ENCODE measurements at regions of chr11 and their contacts with region 1.

Region 1: DNA sequence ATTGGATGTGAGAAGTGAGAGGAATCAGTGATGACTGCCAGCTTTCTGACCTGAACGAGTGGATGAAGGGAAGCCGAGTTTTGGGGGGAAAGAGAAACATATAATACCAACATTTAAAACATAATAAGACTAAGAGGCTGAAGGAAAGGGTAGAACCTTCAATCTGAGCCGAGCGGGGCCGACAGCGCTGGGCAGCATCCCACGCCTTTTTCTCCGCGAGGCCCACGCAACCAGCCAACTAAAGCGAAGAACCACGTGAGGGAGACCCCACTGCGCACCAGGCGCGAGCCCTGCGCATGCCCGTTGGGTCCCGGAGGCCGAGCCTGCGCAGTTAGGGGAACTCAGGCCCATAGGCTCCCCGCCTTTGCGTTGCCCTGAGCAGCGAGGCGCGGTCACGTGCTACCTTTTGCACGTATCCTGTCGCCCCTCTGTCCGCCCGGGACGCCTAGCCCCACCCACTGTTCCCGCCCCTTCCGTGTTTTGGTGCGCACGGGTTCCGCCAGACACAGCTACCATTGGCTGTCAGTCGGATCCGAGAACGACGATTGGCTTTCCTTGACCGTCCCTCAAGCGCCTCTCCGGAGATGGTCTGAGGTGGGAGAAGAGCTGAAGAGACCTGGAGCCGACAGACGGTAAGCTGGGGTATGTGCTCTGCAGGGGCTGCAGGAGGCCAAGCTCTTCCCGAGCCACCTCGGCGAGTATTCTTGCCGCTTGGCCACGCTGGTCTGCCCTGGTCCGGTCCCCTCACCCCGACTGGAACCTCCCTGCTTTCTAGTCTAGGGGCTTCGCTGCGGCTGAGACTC is at the start of gene HINFP:
- DNase-seq: peak; percentile 98 to 100
- H3K4me3 ChIP-seq: peak within 1 kb of the TSS; percentile 85 to 93
- H3K27ac ChIP-seq: peak within 1 kb of the TSS; percentile 71 to 74
- H3K4me1 ChIP-seq: peaks cover 6 to 13% of the 10 kb centered on the region in 2 donors
- H3K27me3 ChIP-seq: no peaks in the 10 kb centered on the region
- CTCF ChIP-seq: no peak
- total RNA-seq, gene HINFP: 36.5 TPM

Region 2: DNA sequence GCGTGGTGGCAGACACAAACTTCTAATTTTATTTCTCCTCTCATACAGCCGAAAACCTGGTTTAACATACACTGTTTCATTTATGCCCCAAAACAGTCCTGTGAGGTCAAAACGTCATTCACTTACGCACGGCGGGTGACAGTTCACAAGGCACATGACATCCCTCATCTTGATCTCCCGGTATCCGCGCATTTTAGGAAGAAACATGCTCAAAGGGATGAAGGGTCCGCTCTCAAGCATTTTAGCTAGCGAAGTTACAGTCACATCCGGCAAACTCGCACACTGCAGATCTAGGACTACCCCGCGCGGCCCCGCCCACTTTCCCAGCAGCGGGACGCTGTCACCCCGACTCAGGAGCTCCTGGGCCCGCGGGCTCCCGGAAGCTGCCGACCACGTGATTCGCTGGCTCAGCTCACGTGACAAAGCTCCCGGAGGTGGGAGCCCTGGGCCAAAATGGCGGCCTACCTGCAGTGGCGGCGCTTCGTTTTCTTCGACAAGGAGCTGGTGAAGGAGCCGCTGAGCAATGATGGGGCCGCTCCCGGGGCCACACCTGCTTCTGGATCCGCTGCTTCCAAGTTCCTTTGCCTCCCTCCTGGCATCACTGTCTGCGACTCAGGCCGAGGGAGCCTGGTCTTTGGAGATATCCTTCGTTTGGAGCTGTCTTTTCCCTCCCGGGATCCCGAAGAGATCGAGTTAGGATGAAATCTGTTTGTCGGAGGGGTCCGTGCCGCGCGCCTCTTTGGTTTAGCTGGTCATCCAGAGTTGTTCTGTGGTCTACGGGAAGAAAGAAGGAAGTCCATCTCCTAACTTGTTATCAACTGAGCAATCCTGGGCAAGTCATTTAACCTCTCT is 53.6 kb before region 1 on chr11 and contains the start of gene VPS11:
- intact Hi-C with region 1: loop called (anchors 5 kb)
- DNase-seq: peak; percentile 89 to 99
- H3K4me3 ChIP-seq: peak within 1 kb of the TSS; percentile 82 to 97
- H3K27ac ChIP-seq: peak within 1 kb of the TSS; percentile 89 to 91
- H3K4me1 ChIP-seq: peaks cover 10 to 28% of the 10 kb centered on the region in 2 donors
- H3K27me3 ChIP-seq: no peaks in the 10 kb centered on the region
- CTCF ChIP-seq: no peak
- total RNA-seq, gene VPS11: 23.4 TPM

Region 3: DNA sequence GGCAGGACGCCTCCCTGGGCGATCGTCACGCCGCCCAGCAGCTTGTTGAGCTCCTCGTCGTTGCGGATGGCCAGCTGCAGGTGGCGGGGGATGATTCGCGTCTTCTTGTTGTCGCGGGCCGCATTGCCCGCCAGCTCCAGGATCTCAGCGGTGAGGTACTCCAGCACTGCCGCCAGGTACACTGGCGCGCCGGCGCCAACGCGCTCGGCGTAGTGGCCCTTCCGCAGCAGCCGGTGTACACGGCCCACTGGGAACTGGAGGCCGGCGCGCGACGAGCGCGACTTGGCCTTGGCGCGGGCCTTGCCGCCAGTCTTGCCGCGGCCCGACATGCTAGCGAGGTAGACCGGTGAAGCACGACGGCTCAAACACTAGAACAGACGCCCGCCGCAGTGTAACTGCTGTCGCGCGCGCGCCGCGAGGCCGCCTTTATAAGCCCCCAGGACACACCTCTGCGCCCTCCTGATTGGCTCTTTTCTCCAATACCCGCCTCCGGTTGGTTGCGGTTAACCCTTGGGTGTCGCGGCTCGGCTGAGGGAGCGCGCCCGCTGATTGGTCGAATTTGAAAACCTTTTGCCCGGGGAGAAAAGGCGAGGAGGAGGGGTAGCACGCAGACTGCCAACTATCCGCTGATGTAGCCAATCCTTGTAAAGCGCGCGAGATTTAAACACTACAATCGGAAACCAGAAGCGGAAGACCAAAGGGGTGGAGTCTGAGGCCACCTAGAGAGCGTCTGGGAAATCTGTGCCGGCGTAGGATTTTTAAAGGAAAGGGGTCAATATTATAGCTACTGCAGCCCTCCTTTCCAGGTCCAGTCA is 25.9 kb before region 1 on chr11:
- intact Hi-C with region 1: loop called (anchors 1 kb)
- DNase-seq: peak; percentile 96 to 100
- H3K4me3 ChIP-seq: peak overlapping the region; percentile 89 to 98
- H3K27ac ChIP-seq: peak overlapping the region; percentile 96 to 97
- H3K4me1 ChIP-seq: peaks cover 18 to 28% of the 10 kb centered on the region in 2 donors
- H3K27me3 ChIP-seq: no peaks in the 10 kb centered on the region
- CTCF ChIP-seq: no peak

Region 4: GRCh38 chr11:119101759-119102423 is 19.3 kb before region 1 on chr11 and contains the start of gene DPAGT1:
- intact Hi-C with region 1: loop called (anchors 1 kb)
- DNase-seq: peak; percentile 70 to 97
- H3K4me3 ChIP-seq: peak within 1 kb of the TSS; percentile 75 to 89
- H3K27ac ChIP-seq: peak within 1 kb of the TSS; percentile 92
- H3K4me1 ChIP-seq: peaks cover 20 to 25% of the 10 kb centered on the region in 2 donors
- H3K27me3 ChIP-seq: no peaks in the 10 kb centered on the region
- CTCF ChIP-seq: no peak
- total RNA-seq, gene DPAGT1: 61.9 TPM